GM12878 (cell line): ENCODE measurements at regions of chrX and their contacts with region 1.

Region 1: GRCh38 chrX:54808605-54809483 is 1.3 kb downstream of the MAGED2 start:
- DNase-seq: peak; percentile 92
- ATAC-seq: peak; percentile 96
- H3K4me3 ChIP-seq: peak overlapping the region; percentile 72
- H3K27ac ChIP-seq: peak overlapping the region; percentile 50
- H3K4me1 ChIP-seq: no peaks in the 10 kb centered on the region
- H3K27me3 ChIP-seq: no peaks in the 10 kb centered on the region
- CTCF ChIP-seq: no peak
- EP300 ChIP-seq: no peak
- POLR2A ChIP-seq: 0 out of 2 replicates have a peak, but pooled peaks have one; percentile 59
- RAD21 ChIP-seq: no peak

Region 2: DNA sequence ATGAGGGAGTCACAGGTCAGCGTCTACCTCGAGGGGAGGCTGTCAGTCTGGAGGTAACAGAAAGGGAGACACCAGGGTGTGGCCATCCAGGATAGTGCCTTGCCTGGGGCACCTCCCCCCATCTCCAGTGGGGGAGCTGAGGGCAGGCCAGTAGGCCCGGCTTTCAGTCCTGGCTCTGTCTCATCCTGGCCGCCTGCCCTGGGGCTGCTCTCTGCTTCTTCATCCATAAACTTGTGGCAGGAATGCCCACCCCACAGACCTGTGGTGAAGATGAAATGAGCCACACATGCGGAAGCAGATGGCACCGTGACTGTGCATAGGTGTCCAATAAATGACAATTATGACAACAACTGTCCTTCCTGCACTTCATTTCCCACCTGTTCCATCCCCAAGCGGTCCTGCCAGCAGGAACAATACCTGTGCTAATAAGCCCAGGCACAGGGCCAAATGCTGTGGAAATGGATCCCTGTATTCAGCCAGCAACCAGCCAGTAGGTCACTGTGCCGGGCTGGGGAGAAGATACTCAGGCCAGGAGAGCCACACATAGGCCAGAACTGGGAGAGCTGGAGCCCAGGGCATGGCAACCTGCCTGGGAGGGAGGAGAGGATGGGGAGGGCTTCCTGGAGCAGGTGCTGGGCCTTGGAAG is 142.0 kb after region 1 on chrX:
- CTCF ChIA-PET with region 1: no interaction called
- POLR2A ChIA-PET with region 1: no interaction called
- RAD21 ChIA-PET with region 1: no interaction called
- SMC1A ChIA-PET with region 1: no interaction called
- in situ Hi-C with region 1: no loop called
- intact Hi-C with region 1: no loop called
- DNase-seq: no peak
- ATAC-seq: no peak
- H3K4me3 ChIP-seq: no peak overlapping the region
- H3K27ac ChIP-seq: no peak overlapping the region
- H3K4me1 ChIP-seq: no peaks in the 10 kb centered on the region
- H3K27me3 ChIP-seq: no peaks in the 10 kb centered on the region
- CTCF ChIP-seq: no peak
- EP300 ChIP-seq: no peak
- POLR2A ChIP-seq: no peak
- RAD21 ChIP-seq: no peak

Region 3: DNA sequence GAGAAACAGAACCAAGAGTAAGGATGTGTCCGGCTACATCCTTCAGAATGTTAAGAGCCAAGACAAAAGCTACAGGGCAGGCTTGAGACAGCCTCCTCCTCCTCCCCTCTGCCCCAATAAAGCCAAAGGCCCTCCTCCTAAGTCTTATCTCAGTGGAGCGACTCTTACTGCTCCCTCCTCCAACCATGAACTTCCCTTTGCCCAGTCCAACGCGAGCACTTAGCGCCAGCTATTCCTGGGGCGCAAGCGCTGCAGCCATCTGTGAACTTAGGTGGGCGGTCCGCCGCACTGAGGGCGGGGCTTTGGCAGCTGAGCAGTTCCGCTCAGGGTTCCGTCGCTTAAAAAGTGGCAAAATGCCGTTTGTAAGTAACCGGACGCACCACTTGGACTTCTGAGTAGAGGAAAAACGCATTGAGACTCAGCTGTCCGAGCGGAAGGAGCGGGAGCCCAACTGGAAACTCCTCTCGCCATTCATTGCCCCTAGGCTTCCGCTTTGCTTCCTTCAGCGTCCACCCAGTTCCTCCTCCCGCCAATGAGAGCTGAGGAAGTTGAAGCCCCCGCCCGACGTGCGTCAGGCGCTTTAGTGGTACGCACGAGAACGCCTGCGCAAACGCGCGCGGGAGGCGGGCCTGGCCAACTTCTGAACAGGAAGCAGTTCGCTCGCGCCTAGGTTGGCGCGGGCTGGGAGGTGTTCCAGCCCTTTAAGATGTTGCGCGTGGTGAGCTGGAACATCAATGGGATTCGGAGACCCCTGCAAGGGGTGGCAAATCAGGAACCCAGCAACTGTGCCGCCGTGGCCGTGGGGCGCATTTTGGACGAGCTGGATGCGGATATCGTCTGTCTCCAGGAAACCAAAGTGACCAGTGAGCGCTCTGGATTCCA is 191.1 kb after region 1 on chrX and contains the start of gene APEX2:
- CTCF ChIA-PET with region 1: no interaction called
- POLR2A ChIA-PET with region 1: interaction called, 4 read pairs
- RAD21 ChIA-PET with region 1: no interaction called
- SMC1A ChIA-PET with region 1: no interaction called
- in situ Hi-C with region 1: no loop called
- intact Hi-C with region 1: loop called (anchors 5 kb)
- DNase-seq: peak; percentile 61
- ATAC-seq: peak; percentile 95
- H3K4me3 ChIP-seq: peak within 1 kb of the TSS; percentile 59
- H3K27ac ChIP-seq: peak within 1 kb of the TSS; percentile 95
- H3K4me1 ChIP-seq: no peaks in the 10 kb centered on the region; the same call in 1 of the 2 replicates
- H3K27me3 ChIP-seq: no peaks in the 10 kb centered on the region
- CTCF ChIP-seq: no peak
- EP300 ChIP-seq: no peak
- POLR2A ChIP-seq: peak; percentile 87
- RAD21 ChIP-seq: no peak
- polyA plus RNA-seq, gene APEX2: 18.9 to 20.4 TPM

Region 4: GRCh38 chrX:55033429-55033828 is 224.6 kb after region 1 on chrX:
- CTCF ChIA-PET with region 1: no interaction called
- POLR2A ChIA-PET with region 1: no interaction called
- RAD21 ChIA-PET with region 1: no interaction called
- SMC1A ChIA-PET with region 1: no interaction called
- in situ Hi-C with region 1: no loop called
- intact Hi-C with region 1: no loop called
- DNase-seq: no peak
- ATAC-seq: no peak
- H3K4me3 ChIP-seq: no peak overlapping the region
- H3K27ac ChIP-seq: no peak overlapping the region
- H3K4me1 ChIP-seq: no peaks in the 10 kb centered on the region
- H3K27me3 ChIP-seq: no peaks in the 10 kb centered on the region
- CTCF ChIP-seq: no peak
- EP300 ChIP-seq: no peak
- POLR2A ChIP-seq: no peak
- RAD21 ChIP-seq: no peak

Region 5: DNA sequence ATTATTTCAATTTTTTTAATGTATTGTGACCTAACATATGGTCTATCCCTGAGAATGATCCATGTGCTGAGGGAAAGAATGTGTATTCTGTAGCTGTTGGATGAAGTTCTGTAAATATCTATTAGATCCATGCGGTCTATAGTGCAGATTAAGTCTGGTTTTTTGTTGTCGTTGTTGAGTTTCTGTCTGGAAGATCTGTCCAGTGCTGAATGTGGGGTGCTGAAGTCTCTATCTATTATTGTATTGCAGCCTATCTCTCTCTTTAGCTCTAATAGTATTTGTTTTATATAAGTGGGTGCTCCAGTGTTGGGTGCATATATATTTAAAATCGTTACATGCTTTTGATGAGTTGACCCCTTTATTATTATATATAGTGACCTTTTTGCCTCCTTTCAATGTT is 482.1 kb after region 1 on chrX:
- CTCF ChIA-PET with region 1: no interaction called
- POLR2A ChIA-PET with region 1: no interaction called
- RAD21 ChIA-PET with region 1: no interaction called
- SMC1A ChIA-PET with region 1: no interaction called
- in situ Hi-C with region 1: no loop called
- intact Hi-C with region 1: no loop called
- DNase-seq: no peak
- ATAC-seq: no peak
- H3K4me3 ChIP-seq: no peak overlapping the region
- H3K27ac ChIP-seq: no peak overlapping the region
- H3K4me1 ChIP-seq: no peaks in the 10 kb centered on the region
- H3K27me3 ChIP-seq: no peaks in the 10 kb centered on the region
- CTCF ChIP-seq: no peak
- EP300 ChIP-seq: no peak
- POLR2A ChIP-seq: no peak
- RAD21 ChIP-seq: no peak